ENCODE measurements at regions of chr20 and their contacts with region 1.

Region 1: DNA sequence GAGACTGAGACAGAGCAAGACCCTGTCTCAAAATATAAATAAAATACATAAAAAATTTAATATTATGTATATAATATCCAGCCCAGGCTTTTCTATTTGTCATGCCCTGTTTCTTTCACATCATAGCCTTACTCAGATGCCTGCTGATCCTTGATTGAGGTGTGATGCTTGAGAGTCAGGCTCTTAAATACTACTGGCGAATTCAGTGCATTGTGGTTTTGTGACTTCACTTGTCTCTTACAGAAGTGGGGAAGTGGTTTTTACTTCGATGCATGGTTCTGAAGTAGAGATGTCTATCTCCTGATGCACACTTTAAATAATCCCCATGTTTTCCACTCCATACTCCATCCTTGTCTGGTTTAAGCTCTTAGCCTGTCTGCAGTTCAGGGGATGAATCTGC is 29.1 kb downstream of the ASXL1 start:
- DNase-seq: no peak
- ATAC-seq: no peak
- H3K4me3 ChIP-seq: no peak overlapping the region
- H3K27ac ChIP-seq: no peak overlapping the region
- H3K4me1 ChIP-seq: peaks cover 0 to 48% (median 23%) of the 10 kb centered on the region in 9 donors
- H3K27me3 ChIP-seq: no peaks in the 10 kb centered on the region
- CTCF ChIP-seq: no peak

Region 2: GRCh38 chr20:33059741-33060390 is 672.6 kb after region 1 on chr20:
- intact Hi-C with region 1: loop called in 1 of 10 experiments (anchors 10 kb)
- DNase-seq: no peak
- ATAC-seq: no peak
- H3K4me3 ChIP-seq: no peak overlapping the region
- H3K27ac ChIP-seq: no peak overlapping the region
- H3K4me1 ChIP-seq: no peaks in the 10 kb centered on the region
- H3K27me3 ChIP-seq: peaks cover 0 to 5% (median 0%) of the 10 kb centered on the region in 7 donors
- CTCF ChIP-seq: no peak

Measured in heart right ventricle (tissue), 16 donors.